Activated CD8-positive, alpha-beta T cell treated with anti-CD3 and anti-CD28 coated beads for 36 hours (primary cell): ENCODE measurements at regions of chr2 and their contacts with region 1.

Region 1: GRCh38 chr2:168920504-168921157 is 19.5 kb downstream of the G6PC2 start:
- DNase-seq: no peak
- ATAC-seq: peak; percentile 34
- H3K4me3 Mint-ChIP-seq: no peak overlapping the region
- H3K27ac Mint-ChIP-seq: no peak overlapping the region
- H3K4me1 Mint-ChIP-seq: peaks cover 11% of the 10 kb centered on the region
- H3K27me3 Mint-ChIP-seq: peaks cover 12% of the 10 kb centered on the region
- CTCF ChIP-seq: peak; percentile 86

Region 2: GRCh38 chr2:168773719-168774521 is 146.7 kb before region 1 on chr2:
- CTCF ChIA-PET with region 1: interaction called, 9 read pairs
- POLR2A ChIA-PET with region 1: no interaction called
- intact Hi-C with region 1: loop called (anchors 5 kb)
- DNase-seq: peak; percentile 50
- ATAC-seq: peak; percentile 74
- H3K4me3 Mint-ChIP-seq: no peak overlapping the region
- H3K27ac Mint-ChIP-seq: no peak overlapping the region
- H3K4me1 Mint-ChIP-seq: no peaks in the 10 kb centered on the region
- H3K27me3 Mint-ChIP-seq: no peaks in the 10 kb centered on the region
- CTCF ChIP-seq: peak; percentile 64

Region 3: DNA sequence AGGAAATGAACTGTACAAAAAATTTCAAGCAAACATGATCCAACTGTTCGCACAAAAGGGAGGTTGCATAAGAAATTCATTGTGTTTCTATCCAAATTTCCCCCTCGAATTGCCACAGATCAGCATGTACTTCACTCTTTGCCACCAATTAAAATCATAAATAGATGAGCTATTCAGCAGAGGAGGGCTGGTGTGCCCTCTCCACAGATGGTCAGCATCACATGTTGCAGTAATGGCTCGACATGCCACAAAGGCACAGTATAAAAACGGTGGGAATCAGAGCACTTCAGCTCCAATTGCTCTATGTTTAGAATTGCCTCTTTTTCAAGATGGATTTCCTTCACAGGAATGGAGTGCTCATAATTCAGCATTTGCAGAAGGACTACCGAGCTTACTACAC is 19.6 kb before region 1 on chr2 and contains the start of gene G6PC2:
- CTCF ChIA-PET with region 1: no interaction called
- POLR2A ChIA-PET with region 1: no interaction called
- intact Hi-C with region 1: no loop called
- DNase-seq: no peak
- ATAC-seq: no peak
- H3K4me3 Mint-ChIP-seq: no peak within 1 kb of the TSS
- H3K27ac Mint-ChIP-seq: no peak within 1 kb of the TSS
- H3K4me1 Mint-ChIP-seq: no peaks in the 10 kb centered on the region
- H3K27me3 Mint-ChIP-seq: peaks cover 9% of the 10 kb centered on the region
- CTCF ChIP-seq: no peak
- total RNA-seq, gene G6PC2: not detected